AG04449 (cell line): ENCODE measurements at regions of chr5 and their contacts with region 1.

Region 1: GRCh38 chr5:54844905-54845566 is 140.4 kb downstream of the ESM1 start:
- DNase-seq: no peak
- H3K4me3 ChIP-seq: no peak overlapping the region
- CTCF ChIP-seq: no peak

Region 2: DNA sequence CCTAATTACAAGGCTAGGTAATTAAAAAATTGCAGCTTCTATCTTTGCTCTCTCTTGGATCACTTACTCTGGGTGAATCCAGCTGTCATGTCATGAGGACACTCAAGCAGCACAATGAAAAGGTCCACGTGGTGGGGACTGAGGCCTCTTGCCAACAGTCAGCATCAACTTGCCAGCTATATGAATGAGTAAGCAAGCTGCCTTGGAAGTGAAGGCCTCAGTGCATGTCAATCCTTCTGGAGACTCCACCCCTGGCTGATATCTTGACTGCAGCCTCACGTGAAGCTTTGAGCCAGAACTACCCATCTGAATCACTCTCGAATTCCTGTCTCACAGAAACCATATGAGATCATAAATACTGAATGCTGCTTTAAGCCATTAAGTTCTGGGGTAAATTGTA is 187.0 kb before region 1 on chr5:
- CTCF ChIA-PET with region 1: interaction called, 11 read pairs
- POLR2A ChIA-PET with region 1: no interaction called
- DNase-seq: no peak
- H3K4me3 ChIP-seq: no peak overlapping the region
- CTCF ChIP-seq: no peak

Region 3: DNA sequence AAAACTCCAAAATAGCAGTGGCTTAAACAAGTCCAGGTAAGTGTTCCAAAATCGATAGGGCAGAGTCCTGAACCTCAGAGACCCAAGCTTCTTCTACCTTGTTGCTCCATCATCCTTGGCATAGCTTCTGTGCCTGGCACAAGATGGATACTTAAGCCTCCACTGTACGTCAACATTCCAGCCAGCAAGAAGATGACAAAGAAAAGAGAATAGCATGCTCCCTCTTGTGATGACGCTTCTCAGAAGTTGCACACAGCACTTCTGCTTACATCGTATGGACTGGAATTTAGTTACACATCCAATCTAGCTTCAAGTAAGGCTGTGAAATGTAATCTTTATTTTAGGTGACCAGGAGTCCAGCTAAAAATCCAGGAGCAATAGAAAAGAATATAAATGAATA is 87.0 kb before region 1 on chr5:
- CTCF ChIA-PET with region 1: interaction called, 10 read pairs
- POLR2A ChIA-PET with region 1: interaction called, 6 read pairs
- DNase-seq: peak; percentile 80
- H3K4me3 ChIP-seq: no peak overlapping the region
- CTCF ChIP-seq: no peak

Region 4: DNA sequence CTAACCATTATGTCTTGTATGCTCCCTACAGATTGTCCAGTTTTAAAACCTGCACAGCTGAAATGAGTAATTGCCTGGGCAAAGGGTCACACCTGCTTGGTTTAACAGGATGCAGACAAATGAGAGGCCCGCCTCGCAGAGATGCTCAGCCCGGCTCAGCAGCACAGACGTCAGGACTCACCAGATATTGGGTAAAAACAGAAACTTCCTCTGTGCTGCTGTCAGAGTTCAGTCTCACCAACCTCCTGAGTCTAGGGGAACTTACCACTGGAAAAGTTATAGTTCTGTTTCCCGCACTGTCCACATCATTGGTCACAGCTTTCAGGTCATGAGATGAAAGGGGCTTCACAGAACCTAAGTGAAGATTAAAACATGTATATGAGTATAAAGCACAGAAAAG is 12.2 kb before region 1 on chr5:
- CTCF ChIA-PET with region 1: interaction called, 17 read pairs
- POLR2A ChIA-PET with region 1: no interaction called
- DNase-seq: no peak
- H3K4me3 ChIP-seq: no peak overlapping the region
- CTCF ChIP-seq: no peak

Region 5: DNA sequence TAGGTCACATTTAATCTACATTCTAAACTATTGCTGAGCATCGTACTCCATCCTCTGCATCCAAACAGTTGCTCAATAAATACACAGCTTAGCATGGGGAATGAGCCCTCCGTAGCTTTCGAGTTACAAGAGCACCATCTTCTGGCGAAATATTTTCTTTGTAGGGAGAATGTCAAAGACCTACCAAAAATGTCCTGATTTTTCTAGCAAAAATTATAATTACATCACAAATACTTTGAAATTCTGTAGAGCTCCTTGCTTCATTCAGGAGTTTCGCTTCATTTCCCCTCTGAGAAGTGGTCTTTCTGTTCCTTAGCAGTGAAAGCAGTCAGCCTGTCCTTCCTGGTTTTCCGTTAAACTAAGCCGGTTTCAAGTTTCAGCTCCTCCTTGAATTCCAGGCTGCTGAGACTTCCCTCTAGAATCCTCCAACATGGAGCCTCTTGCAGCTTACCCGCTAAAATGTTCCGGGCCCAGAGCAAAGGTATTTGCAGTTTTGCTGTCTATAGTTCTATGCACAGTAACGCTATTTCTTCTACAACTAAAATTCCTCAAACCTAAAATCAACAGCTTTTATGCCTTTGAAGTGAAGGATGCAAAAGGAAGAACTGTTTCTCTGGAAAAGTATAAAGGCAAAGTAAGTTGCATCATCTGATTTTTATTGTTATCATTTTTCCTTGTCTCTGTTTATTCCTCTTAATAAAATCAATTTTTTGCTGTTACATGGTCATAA is 314.9 kb after region 1 on chr5 and contains the start of gene GPX8:
- CTCF ChIA-PET with region 1: interaction called, 12 read pairs
- POLR2A ChIA-PET with region 1: no interaction called
- DNase-seq: peak; percentile 59
- H3K4me3 ChIP-seq: peak within 1 kb of the TSS; percentile 69
- CTCF ChIP-seq: peak; percentile 26